ENCODE measurements at regions of chr3 and their contacts with region 1.

Region 1: GRCh38 chr3:39189959-39190269 is 2.5 kb downstream of the XIRP1 start:
- H3K4me3 ChIP-seq: no peak overlapping the region
- H3K27ac ChIP-seq: no peak overlapping the region
- H3K4me1 ChIP-seq: no peaks in the 10 kb centered on the region
- CTCF ChIP-seq: peak; percentile 69; the same call in 1 of the 2 replicates

Region 2: DNA sequence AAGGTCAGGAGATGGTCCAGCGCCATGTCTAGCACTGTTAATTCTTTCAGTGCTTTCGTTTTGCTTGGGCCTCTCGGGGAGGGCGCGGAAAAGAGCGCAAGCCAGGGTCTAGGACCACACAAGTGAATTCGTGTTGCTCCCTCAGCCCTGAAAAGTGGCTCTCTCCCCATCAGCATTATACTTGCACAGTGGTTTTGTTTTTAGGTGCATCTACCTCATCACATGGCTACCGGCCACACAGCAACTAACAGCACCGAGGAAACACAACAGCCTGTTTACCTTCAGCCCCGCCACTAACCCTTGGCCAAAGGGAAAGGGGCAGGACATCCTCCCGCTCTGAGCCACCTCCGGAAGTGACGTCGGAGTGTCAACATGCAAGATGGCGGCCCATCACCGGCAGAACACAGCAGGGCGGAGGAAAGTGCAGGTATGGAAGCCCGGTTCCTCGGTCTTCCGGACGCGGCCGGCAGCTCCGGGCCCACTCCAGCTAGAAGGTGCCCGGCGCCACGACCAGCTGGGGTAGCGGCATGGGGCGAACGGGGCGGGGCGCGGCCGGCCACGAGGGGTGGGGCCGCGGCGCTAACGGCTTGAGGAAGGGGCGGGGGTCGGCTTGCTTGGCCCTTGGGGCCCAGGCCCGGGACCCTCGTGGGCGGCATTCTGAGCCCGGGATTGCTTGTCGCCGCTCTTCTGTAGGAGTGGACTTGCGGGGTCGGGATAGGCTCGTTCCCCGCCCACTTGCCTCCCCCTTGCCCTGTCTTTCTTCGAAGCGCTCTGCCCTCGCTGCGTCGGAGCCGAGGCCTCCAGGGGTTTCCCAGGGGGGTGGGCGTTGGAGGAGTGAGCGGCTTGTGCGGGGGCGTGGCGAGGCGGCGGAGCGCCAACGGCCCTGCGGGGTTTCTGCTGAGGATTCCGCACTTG is 138.0 kb before region 1 on chr3 and contains the starts of genes SCN11A and WDR48:
- CTCF ChIA-PET with region 1: no interaction called
- POLR2A ChIA-PET with region 1: no interaction called
- H3K4me3 ChIP-seq: peak within 1 kb of the TSS; percentile 77
- H3K27ac ChIP-seq: peak within 1 kb of the TSS; percentile 62
- H3K4me1 ChIP-seq: no peaks in the 10 kb centered on the region
- CTCF ChIP-seq: no peak

Region 3: GRCh38 chr3:39113291-39113690 is 76.6 kb before region 1 on chr3:
- CTCF ChIA-PET with region 1: no interaction called
- POLR2A ChIA-PET with region 1: no interaction called
- H3K4me3 ChIP-seq: no peak overlapping the region
- H3K27ac ChIP-seq: no peak overlapping the region
- H3K4me1 ChIP-seq: no peaks in the 10 kb centered on the region
- CTCF ChIP-seq: no peak

Region 4: DNA sequence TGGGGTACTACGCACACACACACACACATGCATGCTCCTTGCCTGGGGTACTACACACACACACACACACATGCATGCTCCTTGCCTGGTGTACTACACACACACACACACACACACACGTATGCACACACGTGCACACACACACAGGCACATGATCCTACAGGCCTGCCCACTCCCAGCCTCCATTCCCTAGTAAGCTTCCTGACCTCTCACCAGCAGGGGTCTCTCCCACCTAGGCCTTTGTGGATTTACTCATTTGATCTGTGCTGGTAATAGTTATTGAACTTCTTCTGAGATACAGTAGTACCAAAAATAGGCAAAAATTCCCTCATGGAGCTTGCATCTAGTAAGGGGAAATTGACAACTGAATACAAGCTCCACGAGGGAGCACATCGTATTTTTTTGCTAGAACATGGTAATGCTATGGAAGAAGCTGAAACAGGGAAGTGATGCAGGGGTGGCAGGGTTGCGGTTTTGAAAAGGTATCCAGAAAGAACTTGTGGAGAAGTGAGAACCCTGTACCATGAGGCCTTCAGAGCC is 63.3 kb before region 1 on chr3:
- CTCF ChIA-PET with region 1: interaction called, 47 read pairs
- POLR2A ChIA-PET with region 1: interaction called, 3 read pairs
- H3K4me3 ChIP-seq: no peak overlapping the region
- H3K27ac ChIP-seq: no peak overlapping the region
- H3K4me1 ChIP-seq: no peaks in the 10 kb centered on the region
- CTCF ChIP-seq: peak; percentile 70

Region 5: GRCh38 chr3:39208463-39209055 is 18.6 kb after region 1 on chr3:
- CTCF ChIA-PET with region 1: interaction called, 13 read pairs
- POLR2A ChIA-PET with region 1: no interaction called
- H3K4me3 ChIP-seq: no peak overlapping the region
- H3K27ac ChIP-seq: no peak overlapping the region
- H3K4me1 ChIP-seq: no peaks in the 10 kb centered on the region
- CTCF ChIP-seq: no peak

Region 6: DNA sequence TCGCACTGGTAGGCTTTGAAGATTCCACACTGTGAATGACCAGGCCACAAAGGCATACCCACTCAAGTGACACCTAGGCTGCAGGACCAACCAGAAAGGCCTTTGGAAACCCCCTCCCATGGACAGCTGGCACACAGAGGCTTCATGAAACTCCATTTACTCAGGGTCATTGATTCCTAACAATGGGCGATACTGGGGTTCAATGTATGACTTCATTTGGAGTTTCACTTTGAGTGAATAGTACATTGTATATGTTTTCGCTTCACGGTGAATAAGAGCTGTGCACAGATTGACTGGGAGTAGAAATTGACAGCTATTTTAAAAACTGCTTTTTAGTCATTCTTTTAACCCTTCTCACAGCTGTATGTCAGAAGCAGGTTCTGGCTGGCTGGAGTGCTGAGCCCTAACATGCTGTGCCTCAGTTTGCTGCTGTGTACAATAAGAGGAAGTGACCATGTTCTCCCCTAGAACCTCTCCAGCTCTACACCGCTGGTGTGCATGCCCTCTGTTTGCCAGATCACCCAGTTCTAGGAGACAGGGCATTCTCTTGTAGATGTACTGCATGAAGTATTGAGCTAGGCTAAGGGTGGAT is 105.4 kb after region 1 on chr3:
- CTCF ChIA-PET with region 1: interaction called, 311 read pairs
- POLR2A ChIA-PET with region 1: no interaction called
- H3K4me3 ChIP-seq: no peak overlapping the region
- H3K27ac ChIP-seq: no peak overlapping the region
- H3K4me1 ChIP-seq: no peaks in the 10 kb centered on the region
- CTCF ChIP-seq: no peak

Measured in HEK293 (cell line).